SK-N-SH (cell line): ENCODE measurements at regions of chr14 and their contacts with region 1.

Region 1: GRCh38 chr14:81269100-81269978 is 48.6 kb upstream of the GTF2A1 start:
- DNase-seq: peak; percentile 74
- H3K4me3 ChIP-seq: no peak overlapping the region
- H3K27ac ChIP-seq: no peak overlapping the region
- H3K4me1 ChIP-seq: peaks cover 0 to 7% of the 10 kb centered on the region in 2 experiments; a peak in 2 of 4 replicates
- H3K27me3 ChIP-seq: no peaks in the 10 kb centered on the region
- CTCF ChIP-seq: peak; percentile 75
- EP300 ChIP-seq: no peak
- RAD21 ChIP-seq: peak; percentile 90

Region 2: GRCh38 chr14:80996049-80996901 is 273.1 kb before region 1 on chr14:
- CTCF ChIA-PET with region 1: interaction called, 11 read pairs
- POLR2A ChIA-PET with region 1: no interaction called
- DNase-seq: peak; percentile 50
- H3K4me3 ChIP-seq: peak overlapping the region in 1 of 2 experiments; percentile 36; a peak in 1 of 4 replicates
- H3K27ac ChIP-seq: no peak overlapping the region
- H3K4me1 ChIP-seq: no peaks in the 10 kb centered on the region
- H3K27me3 ChIP-seq: peaks cover 8% of the 10 kb centered on the region; the same call in 1 of the 2 replicates
- CTCF ChIP-seq: peak; percentile 80
- EP300 ChIP-seq: no peak
- RAD21 ChIP-seq: peak; percentile 65

Region 3: DNA sequence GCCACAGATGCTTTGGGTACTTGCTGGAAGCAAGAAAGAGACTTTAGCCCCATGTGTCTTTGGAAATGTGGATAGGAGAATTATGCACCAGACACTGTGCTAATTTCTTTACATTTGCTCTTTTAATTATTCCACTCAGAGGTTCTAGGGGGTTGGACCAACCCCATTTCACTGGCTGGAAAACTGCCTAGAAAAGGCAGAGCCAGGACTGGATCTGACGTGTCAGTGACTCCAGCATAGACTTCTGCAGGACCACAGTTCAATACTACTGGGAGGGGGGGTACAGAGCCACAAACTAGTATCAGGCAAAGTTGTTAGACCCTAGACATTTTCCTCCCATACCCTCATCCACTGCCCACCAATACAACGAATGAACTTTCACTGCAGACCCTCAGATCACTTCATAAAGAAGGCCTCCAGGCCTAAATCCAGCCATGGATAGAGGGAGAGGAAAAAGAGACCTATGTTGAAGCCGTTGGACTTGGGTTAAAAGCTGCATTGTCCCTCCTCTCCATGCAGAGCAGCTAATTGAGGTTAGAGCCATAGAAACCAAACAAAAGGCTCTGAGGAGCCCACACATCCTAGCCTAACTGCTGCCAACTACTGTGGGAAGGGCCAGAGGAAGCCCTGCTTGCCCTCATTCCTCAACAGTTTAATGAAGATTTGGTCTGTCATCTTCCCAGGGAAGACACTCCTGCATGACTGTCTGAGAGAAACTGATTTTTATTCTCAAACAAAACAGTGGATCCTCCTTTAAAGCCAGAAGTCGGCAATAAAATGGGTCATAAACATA is 62.1 kb after region 1 on chr14:
- CTCF ChIA-PET with region 1: no interaction called
- POLR2A ChIA-PET with region 1: no interaction called
- DNase-seq: no peak
- H3K4me3 ChIP-seq: no peak overlapping the region
- H3K27ac ChIP-seq: no peak overlapping the region
- H3K4me1 ChIP-seq: no peaks in the 10 kb centered on the region
- H3K27me3 ChIP-seq: no peaks in the 10 kb centered on the region
- CTCF ChIP-seq: no peak
- EP300 ChIP-seq: no peak
- RAD21 ChIP-seq: no peak

Region 4: DNA sequence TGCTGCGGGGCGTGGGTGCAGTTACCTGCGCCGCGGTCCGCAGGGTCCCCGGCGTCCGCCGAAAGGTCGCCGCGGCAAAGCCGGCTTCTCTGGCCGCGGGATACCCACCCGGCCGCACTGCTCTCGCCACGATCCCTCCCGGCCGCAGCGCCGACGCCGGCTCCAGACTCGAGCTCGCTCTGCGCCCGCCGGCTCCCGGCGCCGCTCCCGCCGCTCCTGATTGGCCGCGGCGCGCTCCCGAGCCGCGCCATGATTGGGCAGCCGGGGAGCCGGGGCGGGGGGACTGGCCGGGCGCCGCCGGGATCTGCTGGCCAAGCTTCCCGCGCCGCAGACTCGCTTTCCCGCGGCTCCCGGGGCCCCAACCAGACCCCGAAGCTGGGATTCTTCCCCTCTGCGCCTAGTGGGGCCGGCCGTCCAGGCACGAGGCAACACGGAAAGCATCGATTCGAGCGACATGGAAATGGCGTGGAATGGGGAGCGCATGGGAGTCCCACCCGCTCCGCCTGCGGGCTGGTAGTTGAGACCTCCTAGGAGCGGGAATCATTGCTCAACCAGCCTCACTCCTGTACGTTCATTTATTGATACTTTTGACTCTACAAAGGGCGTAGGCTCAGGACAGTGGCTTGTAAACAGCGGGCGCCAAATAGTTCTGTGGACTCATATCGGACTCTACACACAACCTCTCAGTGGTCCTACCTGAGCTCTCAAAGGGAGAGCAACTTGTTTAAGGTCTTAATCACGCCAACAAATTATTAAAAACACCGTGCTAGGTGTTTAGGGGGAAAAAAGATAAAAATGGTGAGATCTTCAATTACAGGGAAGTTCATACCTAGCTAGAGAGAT is 167.2 kb after region 1 on chr14:
- CTCF ChIA-PET with region 1: interaction called, 10 read pairs
- POLR2A ChIA-PET with region 1: no interaction called
- DNase-seq: peak; percentile 97
- H3K4me3 ChIP-seq: peak overlapping the region; percentile 56 to 60
- H3K27ac ChIP-seq: no peak overlapping the region; a peak in 1 of 4 replicates
- H3K4me1 ChIP-seq: peaks cover 0 to 8% of the 10 kb centered on the region in 2 experiments; a peak in 1 of 4 replicates
- H3K27me3 ChIP-seq: peaks cover 32% of the 10 kb centered on the region
- CTCF ChIP-seq: no peak
- EP300 ChIP-seq: no peak
- RAD21 ChIP-seq: no peak

Region 5: GRCh38 chr14:81447021-81447764 is 177.9 kb after region 1 on chr14:
- CTCF ChIA-PET with region 1: interaction called, 321 read pairs
- POLR2A ChIA-PET with region 1: no interaction called
- DNase-seq: no peak
- H3K4me3 ChIP-seq: no peak overlapping the region
- H3K27ac ChIP-seq: no peak overlapping the region
- H3K4me1 ChIP-seq: peaks cover 0 to 4% of the 10 kb centered on the region in 2 experiments; a peak in 1 of 4 replicates
- H3K27me3 ChIP-seq: no peaks in the 10 kb centered on the region; the same call in 1 of the 2 replicates
- CTCF ChIP-seq: no peak
- EP300 ChIP-seq: no peak
- RAD21 ChIP-seq: no peak

Region 6: DNA sequence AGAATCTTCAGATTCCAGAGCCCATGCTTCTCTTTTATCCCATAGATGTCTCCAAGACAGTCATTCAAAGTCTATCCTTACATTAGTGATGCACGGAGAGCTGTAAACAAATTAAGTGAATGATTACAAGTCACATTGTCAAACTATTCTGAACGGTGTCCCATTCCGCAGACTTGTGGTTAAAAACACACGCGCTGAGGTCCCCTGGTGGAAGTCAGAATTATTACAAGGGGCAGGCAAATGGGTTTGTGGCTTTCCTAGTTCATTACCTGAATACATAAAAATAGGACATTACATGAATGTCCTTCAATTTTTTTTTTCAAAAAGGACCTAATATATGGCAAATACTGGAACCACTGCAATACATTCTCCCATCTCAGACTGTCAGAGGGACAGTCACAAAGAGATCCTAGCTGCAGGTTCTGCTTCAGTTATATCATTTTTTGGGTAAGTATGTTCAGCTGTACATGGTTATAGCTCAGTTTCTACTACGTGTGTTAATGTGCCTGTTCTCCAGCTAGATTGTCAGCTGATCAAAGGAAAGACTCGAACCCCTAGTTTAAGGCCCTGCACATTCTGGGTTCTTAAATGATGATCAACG is 183.9 kb after region 1 on chr14:
- CTCF ChIA-PET with region 1: interaction called, 321 read pairs
- POLR2A ChIA-PET with region 1: no interaction called
- DNase-seq: peak; percentile 65
- H3K4me3 ChIP-seq: peak overlapping the region in 1 of 2 experiments; percentile 21; a peak in 1 of 4 replicates
- H3K27ac ChIP-seq: no peak overlapping the region
- H3K4me1 ChIP-seq: peaks cover 0 to 4% of the 10 kb centered on the region in 2 experiments; a peak in 1 of 4 replicates
- H3K27me3 ChIP-seq: no peaks in the 10 kb centered on the region; the same call in 1 of the 2 replicates
- CTCF ChIP-seq: peak; percentile 79
- EP300 ChIP-seq: no peak
- RAD21 ChIP-seq: peak; percentile 87

Region 7: GRCh38 chr14:81464247-81465002 is 195.1 kb after region 1 on chr14:
- CTCF ChIA-PET with region 1: interaction called, 124 read pairs
- POLR2A ChIA-PET with region 1: no interaction called
- DNase-seq: peak; percentile 66
- H3K4me3 ChIP-seq: peak overlapping the region; percentile 43 to 74
- H3K27ac ChIP-seq: no peak overlapping the region
- H3K4me1 ChIP-seq: no peaks in the 10 kb centered on the region
- H3K27me3 ChIP-seq: no peaks in the 10 kb centered on the region
- CTCF ChIP-seq: peak; percentile 90
- EP300 ChIP-seq: no peak
- RAD21 ChIP-seq: peak; percentile 84

Region 8: DNA sequence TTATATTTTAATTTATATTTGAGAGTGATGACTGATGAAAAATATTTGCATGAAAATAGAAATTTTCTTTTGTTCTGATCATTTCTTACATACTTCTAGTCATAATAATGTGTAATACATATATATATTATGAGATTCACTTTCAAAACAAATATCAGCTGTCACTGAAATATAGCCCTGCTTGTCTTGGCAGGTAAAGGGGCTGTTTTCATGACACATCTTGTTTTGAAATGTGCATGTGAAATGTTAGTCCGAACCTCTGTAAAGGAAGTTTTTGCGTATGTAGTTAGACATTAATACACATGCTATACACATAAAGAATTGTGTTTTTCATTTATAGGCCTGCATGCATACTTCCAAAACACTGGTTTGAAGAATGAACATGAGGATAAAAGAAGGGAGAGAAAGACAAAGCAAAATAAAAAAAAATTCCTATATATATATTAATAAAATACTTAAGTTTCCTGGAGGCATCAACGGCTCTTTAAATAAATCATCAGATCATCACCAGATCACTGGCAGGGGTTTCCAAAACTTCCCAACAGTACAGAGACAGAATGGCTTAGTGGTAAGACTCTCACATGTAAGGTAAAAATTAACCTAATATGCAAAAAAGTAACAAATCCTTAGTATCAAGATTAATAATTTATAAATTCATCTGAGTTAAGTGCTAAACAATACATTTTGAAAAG is 204.3 kb after region 1 on chr14:
- CTCF ChIA-PET with region 1: interaction called, 16 read pairs
- POLR2A ChIA-PET with region 1: no interaction called
- DNase-seq: no peak
- H3K4me3 ChIP-seq: no peak overlapping the region
- H3K27ac ChIP-seq: no peak overlapping the region
- H3K4me1 ChIP-seq: no peaks in the 10 kb centered on the region; a peak in 1 of 4 replicates
- H3K27me3 ChIP-seq: no peaks in the 10 kb centered on the region
- CTCF ChIP-seq: no peak
- EP300 ChIP-seq: no peak
- RAD21 ChIP-seq: no peak